ENCODE measurements at regions of chrX and their contacts with region 1.

Region 1: DNA sequence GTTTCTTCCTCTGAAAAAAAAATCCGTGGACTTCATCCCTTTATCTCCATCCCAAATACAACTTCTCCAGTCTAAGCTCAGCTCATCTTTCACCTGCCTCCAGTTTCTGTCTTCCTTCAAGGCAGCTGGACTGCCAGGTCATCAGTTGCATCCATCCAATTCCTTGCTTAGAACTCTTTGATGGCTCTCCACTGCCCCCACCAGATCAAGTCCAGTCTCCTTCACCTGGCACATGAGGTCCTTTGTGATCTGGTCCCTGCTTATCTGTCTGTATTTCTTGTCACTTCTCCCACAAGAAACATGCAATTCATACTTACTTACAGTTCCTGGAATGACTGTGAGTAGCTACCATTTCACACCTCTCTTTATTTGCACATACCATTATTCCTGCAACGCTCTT is 33.8 kb downstream of the OTUD6A start:
- DNase-seq: no peak

Region 2: DNA sequence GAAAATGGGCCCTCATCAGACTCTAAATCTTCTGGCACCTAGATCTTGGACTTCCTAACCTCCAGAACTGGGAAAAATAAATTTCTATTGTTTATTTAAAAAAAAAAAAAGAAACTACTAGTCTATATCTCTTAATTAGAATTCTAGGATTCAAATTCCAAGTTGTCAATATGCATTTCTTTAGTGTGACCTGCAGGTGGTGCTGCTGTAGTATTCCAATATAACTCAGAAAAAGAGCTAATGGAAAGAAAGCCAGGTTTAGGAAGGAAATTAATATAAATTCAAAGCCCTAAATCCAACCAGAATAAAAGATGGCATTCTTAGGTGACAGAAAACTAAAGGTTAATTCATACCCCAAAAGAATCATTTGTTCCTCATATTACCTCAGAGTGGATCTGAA is 671.9 kb before region 1 on chrX:
- intact Hi-C with region 1: loop called (anchors 10 kb)
- DNase-seq: no peak

Region 3: GRCh38 chrX:69493193-69493592 is 602.9 kb before region 1 on chrX:
- intact Hi-C with region 1: loop called (anchors 2 kb)
- DNase-seq: no peak

Region 4: DNA sequence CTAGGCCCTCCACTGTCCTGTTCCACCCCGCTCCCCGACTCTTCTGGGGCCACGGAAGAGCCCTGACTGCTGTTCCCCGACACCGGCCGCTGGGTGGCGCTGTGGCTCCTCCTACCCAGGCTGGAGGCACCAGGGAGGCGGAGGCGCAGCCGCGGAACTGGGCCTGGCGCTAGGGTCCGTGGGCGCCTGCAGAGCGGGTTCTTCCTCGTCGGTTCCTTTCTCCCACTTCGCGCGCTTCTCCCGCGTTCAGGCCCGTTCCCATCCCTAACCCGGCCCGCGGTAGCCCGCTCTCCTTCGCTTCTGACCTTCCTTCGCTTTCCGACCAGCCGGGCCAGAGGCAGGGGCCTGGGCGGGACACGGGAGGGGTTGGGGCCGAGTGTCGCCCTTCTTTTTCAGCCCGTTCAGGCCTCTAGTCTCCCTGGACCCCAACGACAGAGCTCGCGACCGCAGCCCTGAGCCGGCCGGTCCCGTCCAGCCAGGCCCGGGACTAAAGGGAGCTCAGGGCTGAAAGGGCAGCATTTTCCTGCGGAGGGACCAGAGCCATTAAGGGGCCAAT is 557.7 kb before region 1 on chrX:
- intact Hi-C with region 1: loop called (anchors 2 kb)
- DNase-seq: no peak

Region 5: DNA sequence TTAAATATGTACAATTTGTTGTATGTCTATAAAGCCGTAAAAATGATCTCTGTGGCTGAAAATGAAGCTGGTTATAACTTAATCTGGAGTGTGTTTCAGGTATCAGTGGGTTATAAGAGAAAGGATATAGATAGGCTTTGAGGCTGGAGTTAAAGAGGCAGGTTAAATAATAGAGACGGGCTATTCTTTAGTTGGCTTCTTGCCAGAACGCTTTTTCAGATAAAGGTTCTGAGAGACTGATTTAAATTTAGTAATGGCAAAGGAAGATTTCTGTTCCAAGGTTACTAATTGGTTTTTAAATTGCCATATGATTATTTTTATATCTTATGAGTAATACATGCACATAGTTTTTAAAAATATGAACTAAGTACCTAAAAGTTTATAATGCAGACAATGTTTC is 163.7 kb before region 1 on chrX:
- intact Hi-C with region 1: no loop called
- DNase-seq: no peak

Region 6: GRCh38 chrX:69961365-69962072 is 134.5 kb before region 1 on chrX:
- intact Hi-C with region 1: no loop called
- DNase-seq: no peak

Region 7: GRCh38 chrX:70960728-70961127 is 864.7 kb after region 1 on chrX:
- intact Hi-C with region 1: no loop called
- DNase-seq: no peak

Measured in cardiac septum (tissue), 1 donor.